B cell (primary cell): ENCODE measurements at regions of chr7 and their contacts with region 1.

Region 1: DNA sequence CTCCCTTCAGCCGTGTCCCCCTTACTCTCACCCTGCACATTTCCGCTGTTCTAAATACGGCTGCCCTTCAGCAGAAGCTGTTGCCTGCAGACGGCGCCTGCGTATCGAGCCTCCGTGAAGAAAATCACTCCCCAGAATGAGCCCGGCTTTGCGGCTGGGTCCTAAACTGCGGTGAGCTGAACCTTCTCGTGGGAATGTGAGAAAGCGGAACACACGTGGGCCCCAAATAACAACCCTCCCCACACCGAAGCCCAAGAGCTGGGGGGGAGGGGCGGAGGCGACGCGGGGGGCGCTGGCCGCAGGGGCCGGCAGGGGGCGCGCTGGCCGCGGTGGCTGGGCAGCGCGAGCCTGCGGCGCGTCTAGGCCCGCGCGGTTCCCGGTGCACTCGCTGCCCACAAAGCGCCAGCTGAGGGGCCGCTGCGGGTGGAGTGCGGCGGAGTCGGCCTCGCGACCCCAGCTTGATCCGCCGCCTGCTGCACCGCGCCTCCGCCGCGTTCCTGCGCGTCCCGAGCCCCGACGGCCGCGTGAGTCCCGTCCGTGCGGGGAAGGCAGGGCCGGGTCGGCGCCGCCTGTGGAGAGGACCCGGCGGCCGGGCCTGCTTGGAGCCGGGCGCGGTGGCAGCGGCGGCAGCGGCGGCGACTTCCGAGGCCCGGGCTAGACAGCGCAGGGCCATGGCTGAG is at the start of gene ZNF398:
- DNase-seq: peak; percentile 95
- ATAC-seq: peak; percentile 86
- H3K4me3 ChIP-seq: peak within 1 kb of the TSS; percentile 48 to 87 (median 79)
- H3K4me3 Mint-ChIP-seq: peak within 1 kb of the TSS; percentile 93
- H3K27ac ChIP-seq: peak within 1 kb of the TSS; percentile 82 to 83
- H3K27ac Mint-ChIP-seq: peak within 1 kb of the TSS; percentile 96
- H3K4me1 ChIP-seq: peaks cover 22 to 30% of the 10 kb centered on the region in 2 donors
- H3K4me1 Mint-ChIP-seq: peaks cover 32% of the 10 kb centered on the region
- H3K27me3 ChIP-seq: no peaks in the 10 kb centered on the region
- H3K27me3 Mint-ChIP-seq: no peaks in the 10 kb centered on the region
- CTCF ChIP-seq: peak; percentile 85
- total RNA-seq, gene ZNF398: 21.7 and 22.5 TPM in 2 replicates

Region 2: DNA sequence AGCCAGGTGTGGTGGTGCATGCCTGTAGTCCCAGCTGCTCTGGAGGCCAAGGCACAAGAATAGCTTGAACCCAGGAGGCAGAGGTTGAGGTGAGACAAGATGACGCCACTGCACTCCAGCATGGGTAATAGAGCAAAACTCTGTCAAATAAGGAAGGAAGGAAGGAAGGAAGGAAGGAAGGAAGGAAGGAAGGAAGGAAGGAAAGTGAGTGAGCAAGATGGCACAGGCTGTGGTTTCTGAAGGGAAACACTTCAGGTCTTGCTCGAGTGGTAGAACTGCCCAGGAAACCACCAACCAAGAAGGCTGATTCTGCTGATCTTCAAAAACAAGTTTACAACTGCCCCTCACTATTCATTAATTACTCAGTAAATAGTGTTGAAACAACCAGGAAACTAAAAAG is 308.3 kb before region 1 on chr7:
- CTCF ChIA-PET with region 1: no interaction called
- POLR2A ChIA-PET with region 1: no interaction called
- intact Hi-C with region 1: no loop called
- DNase-seq: peak; percentile 65
- ATAC-seq: peak; percentile 53
- H3K4me3 ChIP-seq: no peak overlapping the region
- H3K4me3 Mint-ChIP-seq: peak overlapping the region; percentile 48
- H3K27ac ChIP-seq: peak overlapping the region; percentile 19 to 68
- H3K27ac Mint-ChIP-seq: peak overlapping the region; percentile 74
- H3K4me1 ChIP-seq: peaks cover 6 to 7% of the 10 kb centered on the region in 2 donors
- H3K4me1 Mint-ChIP-seq: peaks cover 15% of the 10 kb centered on the region
- H3K27me3 ChIP-seq: no peaks in the 10 kb centered on the region
- H3K27me3 Mint-ChIP-seq: no peaks in the 10 kb centered on the region
- CTCF ChIP-seq: no peak

Region 3: DNA sequence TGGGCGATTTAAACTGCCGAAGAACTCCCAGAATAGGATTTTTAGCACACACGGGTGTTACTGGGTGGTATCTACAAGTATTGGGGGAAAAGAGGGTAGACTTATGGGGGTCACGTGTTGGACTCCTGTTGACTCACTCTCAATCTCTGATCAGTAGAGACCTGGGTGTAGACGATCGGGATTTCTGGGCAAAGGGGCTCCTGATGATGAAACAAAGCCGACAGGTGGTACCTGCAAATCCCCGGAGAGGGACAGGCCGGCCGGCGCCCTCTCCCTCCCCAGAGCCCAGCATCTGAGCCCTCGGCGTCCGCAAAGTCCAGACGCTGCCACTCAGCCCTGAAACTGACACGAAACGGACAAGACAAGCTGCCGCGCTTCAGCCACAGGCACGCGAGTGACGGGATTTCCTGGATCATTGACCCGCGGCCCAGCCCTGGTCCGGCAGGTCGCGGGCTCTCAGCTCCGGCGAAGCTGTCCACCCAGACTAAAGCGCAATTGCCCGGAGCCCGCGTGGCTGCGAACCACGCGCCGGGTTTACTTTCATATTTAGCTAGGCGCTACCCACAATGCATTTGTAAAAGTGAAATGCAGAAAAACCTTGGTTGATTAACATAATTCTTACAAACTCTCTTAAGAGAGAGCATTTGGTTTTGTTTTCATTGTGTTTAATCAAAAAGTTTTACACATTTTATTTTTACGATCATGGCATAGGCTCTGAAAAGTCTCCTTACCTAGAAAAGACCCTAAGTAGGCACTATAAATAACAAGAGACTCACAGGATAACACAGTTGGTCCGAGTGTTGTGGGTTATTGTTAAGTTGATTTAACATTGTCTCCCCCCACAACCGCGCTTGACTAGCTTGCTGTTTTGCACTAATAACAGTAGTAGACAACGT is 206.3 kb before region 1 on chr7:
- CTCF ChIA-PET with region 1: no interaction called
- POLR2A ChIA-PET with region 1: no interaction called
- intact Hi-C with region 1: loop called (anchors 2 kb)
- DNase-seq: peak; percentile 91
- ATAC-seq: peak; percentile 80
- H3K4me3 ChIP-seq: peak overlapping the region; percentile 85 to 98 (median 89)
- H3K4me3 Mint-ChIP-seq: peak overlapping the region; percentile 95
- H3K27ac ChIP-seq: peak overlapping the region; percentile 77 to 88
- H3K27ac Mint-ChIP-seq: peak overlapping the region; percentile 97
- H3K4me1 ChIP-seq: peaks cover 6 to 12% of the 10 kb centered on the region in 2 donors
- H3K4me1 Mint-ChIP-seq: peaks cover 13% of the 10 kb centered on the region
- H3K27me3 ChIP-seq: no peaks in the 10 kb centered on the region
- H3K27me3 Mint-ChIP-seq: no peaks in the 10 kb centered on the region
- CTCF ChIP-seq: no peak

Region 4: GRCh38 chr7:149028346-149029109 is 118.7 kb before region 1 on chr7 and contains the start of gene PDIA4:
- CTCF ChIA-PET with region 1: no interaction called
- POLR2A ChIA-PET with region 1: interaction called, 3 read pairs
- intact Hi-C with region 1: loop called (anchors 1 kb)
- DNase-seq: peak; percentile 99
- ATAC-seq: peak; percentile 86
- H3K4me3 ChIP-seq: peak within 1 kb of the TSS; percentile 51 to 77 (median 73)
- H3K4me3 Mint-ChIP-seq: peak within 1 kb of the TSS; percentile 93
- H3K27ac ChIP-seq: peak within 1 kb of the TSS; percentile 39 to 94
- H3K27ac Mint-ChIP-seq: peak within 1 kb of the TSS; percentile 91
- H3K4me1 ChIP-seq: peaks cover 19 to 21% of the 10 kb centered on the region in 2 donors
- H3K4me1 Mint-ChIP-seq: peaks cover 39% of the 10 kb centered on the region
- H3K27me3 ChIP-seq: no peaks in the 10 kb centered on the region
- H3K27me3 Mint-ChIP-seq: no peaks in the 10 kb centered on the region
- CTCF ChIP-seq: peak; percentile 47
- total RNA-seq, gene PDIA4: 34.7 and 36.5 TPM in 2 replicates

Region 5: DNA sequence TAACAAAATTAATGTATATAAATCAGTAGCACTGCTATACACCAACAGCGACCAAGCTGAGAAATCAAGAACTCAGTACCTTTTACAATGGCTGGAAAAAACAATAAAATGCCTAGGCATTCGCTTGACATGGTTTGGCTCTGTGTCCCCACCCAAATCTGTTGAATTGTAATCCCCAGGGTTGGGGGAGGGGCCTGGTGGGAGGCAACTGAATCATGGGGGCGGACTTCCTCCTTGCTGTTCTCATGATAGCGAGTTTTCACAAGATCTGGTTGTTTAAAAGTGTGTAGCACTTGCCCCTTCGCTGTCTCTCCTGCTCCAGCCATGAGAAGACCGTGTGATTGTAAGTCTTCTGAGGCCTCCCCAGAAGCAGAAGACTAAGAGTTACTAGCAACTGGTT is 65.3 kb before region 1 on chr7:
- CTCF ChIA-PET with region 1: no interaction called
- POLR2A ChIA-PET with region 1: no interaction called
- intact Hi-C with region 1: no loop called
- DNase-seq: no peak
- ATAC-seq: no peak
- H3K4me3 ChIP-seq: no peak overlapping the region
- H3K4me3 Mint-ChIP-seq: no peak overlapping the region
- H3K27ac ChIP-seq: no peak overlapping the region
- H3K27ac Mint-ChIP-seq: no peak overlapping the region
- H3K4me1 ChIP-seq: no peaks in the 10 kb centered on the region
- H3K4me1 Mint-ChIP-seq: peaks cover 11% of the 10 kb centered on the region
- H3K27me3 ChIP-seq: no peaks in the 10 kb centered on the region
- H3K27me3 Mint-ChIP-seq: no peaks in the 10 kb centered on the region
- CTCF ChIP-seq: no peak

Region 6: GRCh38 chr7:149104749-149105148 is 42.5 kb before region 1 on chr7:
- CTCF ChIA-PET with region 1: no interaction called
- POLR2A ChIA-PET with region 1: no interaction called
- intact Hi-C with region 1: no loop called
- DNase-seq: no peak
- ATAC-seq: no peak
- H3K4me3 ChIP-seq: no peak overlapping the region
- H3K4me3 Mint-ChIP-seq: no peak overlapping the region
- H3K27ac ChIP-seq: no peak overlapping the region
- H3K27ac Mint-ChIP-seq: no peak overlapping the region
- H3K4me1 ChIP-seq: no peaks in the 10 kb centered on the region
- H3K4me1 Mint-ChIP-seq: no peaks in the 10 kb centered on the region
- H3K27me3 ChIP-seq: no peaks in the 10 kb centered on the region
- H3K27me3 Mint-ChIP-seq: no peaks in the 10 kb centered on the region
- CTCF ChIP-seq: no peak

Region 7: DNA sequence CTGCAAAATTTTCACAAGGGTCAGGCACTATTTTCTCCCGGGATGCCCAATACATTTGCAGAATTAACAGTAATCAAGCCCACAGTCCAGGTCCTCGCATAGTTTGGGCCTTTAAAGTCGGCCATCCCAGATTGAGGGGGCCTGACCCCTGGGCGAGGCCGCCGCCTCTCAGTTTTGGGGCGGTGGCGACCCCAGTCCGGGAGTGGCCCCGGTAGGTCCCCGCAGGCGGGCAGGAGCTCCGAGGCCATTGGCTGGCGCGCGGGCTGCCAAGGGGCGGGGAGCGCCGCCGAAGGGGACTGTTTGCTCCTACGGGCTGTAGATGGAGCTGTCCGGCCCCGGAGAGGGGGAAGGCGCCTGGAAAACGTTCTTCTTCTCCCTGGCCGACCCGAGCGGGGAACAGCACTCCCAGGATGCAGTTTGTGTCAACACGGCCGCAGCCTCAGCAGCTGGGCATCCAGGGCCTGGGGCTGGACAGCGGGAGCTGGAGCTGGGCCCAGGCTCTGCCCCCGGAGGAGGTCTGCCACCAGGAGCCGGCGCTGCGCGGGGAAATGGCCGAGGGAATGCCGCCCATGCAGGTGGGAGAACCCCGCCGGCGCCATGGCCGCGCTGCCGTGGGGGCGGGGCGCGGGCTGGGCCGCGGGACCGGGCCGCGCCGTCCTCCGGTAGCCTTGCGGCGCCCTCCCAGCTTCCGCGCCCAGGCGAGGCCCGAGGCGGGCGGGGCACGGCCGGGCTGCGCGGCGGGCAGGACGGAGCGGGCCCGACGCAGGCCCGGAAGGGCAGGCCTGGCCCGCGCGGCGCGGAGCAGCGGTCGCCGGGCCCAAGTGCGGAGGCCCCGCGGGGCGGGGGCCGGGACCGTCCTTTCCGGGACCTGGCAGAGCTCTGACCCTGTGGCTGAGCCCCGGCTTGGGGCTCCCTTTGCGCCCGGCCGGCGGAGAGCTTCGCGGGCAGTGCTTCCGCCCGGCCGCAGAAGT is 48.3 kb after region 1 on chr7 and contains the start of gene ZNF282:
- CTCF ChIA-PET with region 1: interaction called, 18 read pairs
- POLR2A ChIA-PET with region 1: interaction called, 3 read pairs
- intact Hi-C with region 1: loop called (anchors 5 kb)
- DNase-seq: peak; percentile 81
- ATAC-seq: peak; percentile 84
- H3K4me3 ChIP-seq: peak within 1 kb of the TSS; percentile 60 to 92 (median 83)
- H3K4me3 Mint-ChIP-seq: peak within 1 kb of the TSS; percentile 89
- H3K27ac ChIP-seq: peak within 1 kb of the TSS; percentile 47 to 76
- H3K27ac Mint-ChIP-seq: peak within 1 kb of the TSS; percentile 81
- H3K4me1 ChIP-seq: peaks cover 14 to 18% of the 10 kb centered on the region in 2 donors
- H3K4me1 Mint-ChIP-seq: peaks cover 38% of the 10 kb centered on the region
- H3K27me3 ChIP-seq: no peaks in the 10 kb centered on the region
- H3K27me3 Mint-ChIP-seq: no peaks in the 10 kb centered on the region
- CTCF ChIP-seq: peak; percentile 58
- total RNA-seq, gene ZNF282: 25.7 and 26.8 TPM in 2 replicates

Region 8: DNA sequence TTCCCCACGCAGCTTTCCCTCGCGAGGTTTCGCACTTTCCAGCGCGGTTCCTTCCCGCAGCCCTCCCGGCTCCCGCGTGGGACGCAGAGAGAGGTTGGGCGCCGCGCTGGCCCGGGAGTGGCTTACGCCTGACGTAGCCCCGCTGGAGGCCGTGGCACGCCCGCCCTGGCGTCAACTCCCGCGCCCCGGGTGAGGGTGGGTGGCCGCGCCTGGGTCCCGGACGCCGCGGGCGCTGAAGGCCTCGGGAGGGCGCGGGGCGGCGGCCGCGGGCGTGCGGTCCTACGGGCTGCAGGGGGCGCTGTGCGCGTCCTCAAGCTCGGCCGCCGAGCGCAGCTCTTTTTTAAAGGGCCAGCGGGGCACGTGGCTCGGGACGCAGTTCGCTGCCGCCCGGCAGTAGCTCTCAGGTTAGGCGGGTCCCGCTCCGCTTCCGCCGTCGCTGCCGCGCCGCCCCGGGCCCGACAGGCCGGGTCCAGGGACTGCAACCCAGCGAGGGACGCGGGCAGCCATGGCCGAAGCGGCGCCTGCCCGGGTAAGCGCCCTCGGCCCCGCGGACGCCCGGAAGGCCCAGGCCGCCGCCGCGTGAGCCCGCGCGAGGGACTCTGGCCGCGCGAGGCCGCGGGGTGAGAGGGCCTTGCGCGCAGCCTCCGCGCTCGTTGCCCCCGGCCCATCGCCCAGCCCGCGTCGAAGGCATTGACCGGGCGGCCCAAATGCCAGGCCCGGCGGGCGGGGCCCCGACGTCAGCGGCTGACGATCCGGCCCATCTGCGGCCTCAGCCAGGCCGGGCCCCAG is 114.8 kb after region 1 on chr7 and contains the start of gene ZNF783:
- CTCF ChIA-PET with region 1: interaction called, 5 read pairs
- POLR2A ChIA-PET with region 1: interaction called, 3 read pairs
- intact Hi-C with region 1: loop called (anchors 1 kb)
- DNase-seq: peak; percentile 94
- ATAC-seq: peak; percentile 93
- H3K4me3 ChIP-seq: peak within 1 kb of the TSS in 4 of 5 experiments; percentile 64 to 75 (median 68)
- H3K4me3 Mint-ChIP-seq: peak within 1 kb of the TSS; percentile 94
- H3K27ac ChIP-seq: peak within 1 kb of the TSS; percentile 69 to 76
- H3K27ac Mint-ChIP-seq: peak within 1 kb of the TSS; percentile 92
- H3K4me1 ChIP-seq: peaks cover 13 to 17% of the 10 kb centered on the region in 2 donors
- H3K4me1 Mint-ChIP-seq: peaks cover 21% of the 10 kb centered on the region
- H3K27me3 ChIP-seq: no peaks in the 10 kb centered on the region
- H3K27me3 Mint-ChIP-seq: no peaks in the 10 kb centered on the region
- CTCF ChIP-seq: peak; percentile 86
- total RNA-seq, gene ZNF783: 43.8 and 44.8 TPM in 2 replicates

Region 9: GRCh38 chr7:149460493-149461277 is 313.5 kb after region 1 on chr7 and contains the start of gene ZNF777:
- CTCF ChIA-PET with region 1: interaction called, 3 read pairs
- POLR2A ChIA-PET with region 1: no interaction called
- intact Hi-C with region 1: loop called (anchors 1 kb)
- DNase-seq: peak; percentile 87
- ATAC-seq: peak; percentile 97
- H3K4me3 ChIP-seq: peak within 1 kb of the TSS; percentile 25 to 94 (median 70)
- H3K4me3 Mint-ChIP-seq: peak within 1 kb of the TSS; percentile 92
- H3K27ac ChIP-seq: peak within 1 kb of the TSS in 1 of 2 donors; percentile 65
- H3K27ac Mint-ChIP-seq: peak within 1 kb of the TSS; percentile 89
- H3K4me1 ChIP-seq: peaks cover 14% of the 10 kb centered on the region in 2 donors
- H3K4me1 Mint-ChIP-seq: peaks cover 31% of the 10 kb centered on the region
- H3K27me3 ChIP-seq: peaks cover 0 to 11% (median 2%) of the 10 kb centered on the region in 4 experiments
- H3K27me3 Mint-ChIP-seq: peaks cover 14% of the 10 kb centered on the region
- CTCF ChIP-seq: peak; percentile 43
- total RNA-seq, gene ZNF777: 14.9 and 16.0 TPM in 2 replicates

Region 10: GRCh38 chr7:149624419-149625339 is 477.5 kb after region 1 on chr7:
- CTCF ChIA-PET with region 1: no interaction called
- POLR2A ChIA-PET with region 1: no interaction called
- intact Hi-C with region 1: loop called (anchors 5 kb)
- DNase-seq: peak; percentile 94
- ATAC-seq: peak; percentile 90
- H3K4me3 ChIP-seq: peak overlapping the region; percentile 38 to 81 (median 76)
- H3K4me3 Mint-ChIP-seq: peak overlapping the region; percentile 95
- H3K27ac ChIP-seq: peak overlapping the region; percentile 48 to 78
- H3K27ac Mint-ChIP-seq: peak overlapping the region; percentile 93
- H3K4me1 ChIP-seq: peaks cover 25 to 33% of the 10 kb centered on the region in 2 donors
- H3K4me1 Mint-ChIP-seq: peaks cover 39% of the 10 kb centered on the region
- H3K27me3 ChIP-seq: peaks cover 0 to 3% (median 0%) of the 10 kb centered on the region in 4 experiments
- H3K27me3 Mint-ChIP-seq: peaks cover 9% of the 10 kb centered on the region
- CTCF ChIP-seq: peak; percentile 93